ENCODE measurements at regions of chr2 and their contacts with region 1.

Region 1: GRCh38 chr2:119491808-119492533 is 32.3 kb downstream of the SCTR start:
- DNase-seq: peak; percentile 74
- H3K4me3 Mint-ChIP-seq: peak overlapping the region; percentile 24
- H3K27ac Mint-ChIP-seq: peak overlapping the region; percentile 91
- H3K4me1 Mint-ChIP-seq: peaks cover 60% of the 10 kb centered on the region
- H3K27me3 Mint-ChIP-seq: no peaks in the 10 kb centered on the region
- CTCF ChIP-seq: no peak

Region 2: DNA sequence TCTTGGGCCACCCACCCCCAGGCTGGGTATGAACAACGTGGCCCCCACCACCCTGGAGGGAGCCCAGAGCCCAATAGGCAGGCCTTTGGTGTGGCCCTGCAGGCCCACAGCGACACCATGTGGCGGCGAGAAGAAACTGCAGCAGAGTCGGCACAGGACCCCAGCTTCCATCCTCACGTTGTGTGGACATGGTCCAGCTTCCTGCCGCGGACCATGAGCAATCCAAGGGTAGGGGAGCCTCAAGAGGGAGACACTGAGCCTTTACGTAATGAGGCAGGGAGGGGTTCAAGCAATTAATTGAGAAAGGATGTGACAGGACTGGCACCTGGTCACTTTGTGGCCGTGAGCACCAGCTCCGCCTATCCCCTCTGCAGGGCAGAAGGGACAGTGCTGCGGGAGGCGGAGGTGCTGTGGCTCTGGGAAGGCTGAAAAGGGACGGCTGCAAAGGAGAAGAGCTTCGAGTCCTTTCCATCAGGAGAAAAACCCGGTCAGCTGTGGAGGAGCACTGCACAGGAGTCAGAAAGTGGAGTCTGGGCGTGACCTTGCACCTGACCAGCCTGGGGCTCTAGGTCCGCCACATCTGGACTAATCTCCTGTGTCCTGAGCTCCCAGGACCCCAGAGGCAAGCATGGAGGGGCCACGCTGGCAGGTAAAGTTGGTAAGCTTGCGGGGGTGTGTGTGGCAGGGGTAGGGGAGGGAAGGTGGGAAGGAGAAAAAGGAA is 15.5 kb before region 1 on chr2:
- CTCF ChIA-PET with region 1: interaction called, 12 read pairs
- intact Hi-C with region 1: no loop called
- DNase-seq: peak; percentile 67
- H3K4me3 Mint-ChIP-seq: no peak overlapping the region
- H3K27ac Mint-ChIP-seq: no peak overlapping the region
- H3K4me1 Mint-ChIP-seq: peaks cover 8% of the 10 kb centered on the region
- H3K27me3 Mint-ChIP-seq: no peaks in the 10 kb centered on the region
- CTCF ChIP-seq: peak; percentile 91

Region 3: DNA sequence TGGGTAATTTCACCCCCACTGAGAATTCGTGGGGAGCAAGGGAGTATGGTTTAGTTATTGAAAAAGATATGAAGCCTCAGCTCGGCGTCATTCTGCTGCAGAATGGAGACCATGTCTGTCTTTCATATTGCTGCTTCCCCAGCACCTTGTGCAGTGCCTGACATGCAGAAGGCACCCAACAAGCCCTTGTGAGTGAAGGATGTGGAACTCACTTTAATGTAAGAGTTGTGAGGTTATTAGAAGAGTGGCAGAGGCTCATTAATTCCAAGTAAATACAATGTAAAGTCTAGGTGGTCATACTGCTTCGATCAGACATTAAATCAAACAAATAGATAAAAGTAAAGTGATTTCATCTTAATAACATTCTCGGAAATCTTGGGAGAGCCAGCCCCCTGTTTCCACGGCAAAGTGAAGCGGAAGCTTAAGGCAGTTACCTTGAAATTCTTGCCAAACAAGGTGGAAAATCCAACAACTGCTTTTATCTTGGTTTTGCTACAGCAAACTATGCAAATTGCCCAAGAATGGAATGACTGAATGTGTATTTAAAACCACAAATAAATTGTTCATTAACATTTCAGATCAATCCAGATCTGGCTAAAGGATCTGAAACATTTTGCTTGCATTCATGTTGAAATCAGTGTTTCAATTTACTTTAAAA is 61.8 kb after region 1 on chr2:
- CTCF ChIA-PET with region 1: no interaction called
- intact Hi-C with region 1: loop called (anchors 5 kb)
- DNase-seq: peak; percentile 65
- H3K4me3 Mint-ChIP-seq: peak overlapping the region; percentile 24
- H3K27ac Mint-ChIP-seq: peak overlapping the region; percentile 83
- H3K4me1 Mint-ChIP-seq: peaks cover 51% of the 10 kb centered on the region
- H3K27me3 Mint-ChIP-seq: no peaks in the 10 kb centered on the region
- CTCF ChIP-seq: no peak

Region 4: DNA sequence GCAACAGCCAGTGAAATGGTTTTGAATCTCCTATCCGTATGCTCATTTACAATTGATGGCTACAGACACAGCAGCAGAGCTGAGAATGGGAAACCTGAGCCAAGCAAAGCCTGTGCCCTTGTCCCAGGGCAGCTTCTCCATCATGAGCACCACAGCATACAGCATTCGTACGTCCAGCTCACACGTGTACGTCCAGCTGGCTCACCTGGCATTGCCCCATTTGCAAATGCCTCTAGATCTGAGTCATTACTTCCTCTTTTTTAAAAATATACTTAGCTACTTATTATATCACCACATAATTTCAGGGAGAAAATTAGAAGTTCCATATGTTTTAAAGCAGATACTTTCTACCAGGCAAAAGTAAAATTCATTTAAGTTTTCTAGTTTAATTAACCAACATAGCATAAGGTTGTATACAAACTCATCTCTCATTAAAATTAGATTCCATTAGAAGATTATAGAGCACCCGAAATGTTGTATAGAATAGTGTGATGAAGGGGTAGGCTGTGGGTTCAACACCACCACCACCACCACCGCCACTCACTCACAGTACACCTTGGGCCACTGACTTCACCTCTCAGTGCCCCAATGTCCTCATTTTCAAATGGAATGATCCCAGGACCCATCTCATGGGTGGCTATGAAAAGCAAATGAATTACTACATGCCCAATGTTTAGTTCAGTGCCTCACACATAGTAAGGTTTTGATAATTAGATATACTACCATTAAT is 155.6 kb after region 1 on chr2:
- CTCF ChIA-PET with region 1: no interaction called
- intact Hi-C with region 1: loop called (anchors 5 kb)
- DNase-seq: peak; percentile 58
- H3K4me3 Mint-ChIP-seq: no peak overlapping the region
- H3K27ac Mint-ChIP-seq: no peak overlapping the region
- H3K4me1 Mint-ChIP-seq: peaks cover 52% of the 10 kb centered on the region
- H3K27me3 Mint-ChIP-seq: no peaks in the 10 kb centered on the region
- CTCF ChIP-seq: no peak

Measured in Calu3 (cell line).